ENCODE measurements at regions of chr19 and their contacts with region 1.

Region 1: DNA sequence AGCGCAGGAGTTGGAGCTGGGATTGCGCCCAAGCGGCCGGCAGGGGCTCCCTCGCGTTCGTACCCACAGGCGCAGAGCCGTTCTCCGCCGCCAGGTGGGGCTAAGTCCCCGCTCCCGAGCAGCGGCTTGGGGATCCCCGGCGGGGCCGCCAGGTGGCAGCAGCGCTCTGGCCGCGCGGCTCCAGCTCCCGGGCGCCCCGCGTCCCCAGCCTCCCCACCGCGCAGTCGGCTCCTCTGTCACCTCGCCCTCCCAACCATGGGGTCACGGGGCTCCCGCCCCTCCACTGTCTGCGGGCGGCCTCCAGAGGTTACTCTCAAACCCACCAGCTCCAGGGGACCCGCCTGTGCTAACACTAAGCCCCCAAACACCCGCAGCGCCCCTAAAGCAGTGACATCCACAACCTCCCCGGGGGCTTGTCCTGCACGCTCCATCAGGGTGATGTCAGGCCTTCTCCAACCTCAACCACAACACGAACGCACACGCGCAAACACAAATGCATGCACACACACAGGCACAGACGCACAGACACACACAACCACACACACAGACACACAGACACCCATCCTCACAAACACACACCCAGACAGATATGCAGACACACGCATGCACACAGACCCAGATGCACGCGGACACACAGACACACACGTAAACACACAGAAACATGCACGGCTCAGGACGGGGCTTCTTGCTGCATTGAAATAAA is 18.4 kb upstream of the KCTD15 start:
- DNase-seq: peak; percentile 90
- ATAC-seq: peak; percentile 93 to 95
- H3K4me3 ChIP-seq: no peak overlapping the region
- H3K27ac ChIP-seq: no peak overlapping the region
- H3K4me1 ChIP-seq: peaks cover 4% of the 10 kb centered on the region
- H3K27me3 ChIP-seq: peaks cover 27% of the 10 kb centered on the region
- CTCF ChIP-seq: peak; percentile 100

Region 2: GRCh38 chr19:33430674-33431277 is 347.5 kb before region 1 on chr19:
- intact Hi-C with region 1: loop called (anchors 10 kb)
- DNase-seq: peak; percentile 68
- ATAC-seq: peak; percentile 75 to 77
- H3K4me3 ChIP-seq: no peak overlapping the region
- H3K27ac ChIP-seq: no peak overlapping the region
- H3K4me1 ChIP-seq: no peaks in the 10 kb centered on the region
- H3K27me3 ChIP-seq: no peaks in the 10 kb centered on the region
- CTCF ChIP-seq: peak; percentile 80

Region 3: DNA sequence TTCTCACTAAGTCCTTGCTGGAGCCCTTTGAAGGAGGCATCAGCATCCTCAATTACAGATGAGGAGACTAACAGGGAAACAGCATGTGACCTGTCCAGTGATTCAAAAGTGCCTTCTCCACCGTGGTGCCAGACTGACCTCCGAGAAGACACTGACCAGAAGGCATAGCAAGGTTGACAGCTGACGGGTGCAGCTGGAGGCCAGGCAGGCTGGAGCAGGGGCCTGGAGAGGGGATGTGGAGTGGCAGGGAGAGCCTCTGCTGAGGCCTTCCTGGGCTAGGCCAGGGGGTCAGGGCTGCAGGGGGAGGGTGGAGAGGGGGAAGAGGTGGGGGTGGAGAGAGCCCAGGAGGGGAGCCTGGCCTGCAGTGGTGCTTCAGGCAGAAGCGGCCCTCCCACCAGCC is 84.7 kb after region 1 on chr19:
- intact Hi-C with region 1: no loop called
- DNase-seq: no peak
- ATAC-seq: no peak
- H3K4me3 ChIP-seq: no peak overlapping the region
- H3K27ac ChIP-seq: no peak overlapping the region
- H3K4me1 ChIP-seq: no peaks in the 10 kb centered on the region
- H3K27me3 ChIP-seq: no peaks in the 10 kb centered on the region
- CTCF ChIP-seq: no peak

Region 4: GRCh38 chr19:34096020-34096915 is 318.0 kb after region 1 on chr19:
- intact Hi-C with region 1: loop called (anchors 5 kb)
- DNase-seq: no peak
- ATAC-seq: peak in 1 of 2 donors; percentile 35
- H3K4me3 ChIP-seq: no peak overlapping the region
- H3K27ac ChIP-seq: no peak overlapping the region
- H3K4me1 ChIP-seq: no peaks in the 10 kb centered on the region
- H3K27me3 ChIP-seq: peaks cover 3% of the 10 kb centered on the region
- CTCF ChIP-seq: peak; percentile 67